Activated naive CD4-positive, alpha-beta T cell treated with anti-CD3 and anti-CD28 coated beads, Interleukin-2, amount 10 ng/mL, durations not matched to agents 7 days and 5 days (primary cell): ENCODE measurements at regions of chr17 and their contacts with region 1.

Region 1: DNA sequence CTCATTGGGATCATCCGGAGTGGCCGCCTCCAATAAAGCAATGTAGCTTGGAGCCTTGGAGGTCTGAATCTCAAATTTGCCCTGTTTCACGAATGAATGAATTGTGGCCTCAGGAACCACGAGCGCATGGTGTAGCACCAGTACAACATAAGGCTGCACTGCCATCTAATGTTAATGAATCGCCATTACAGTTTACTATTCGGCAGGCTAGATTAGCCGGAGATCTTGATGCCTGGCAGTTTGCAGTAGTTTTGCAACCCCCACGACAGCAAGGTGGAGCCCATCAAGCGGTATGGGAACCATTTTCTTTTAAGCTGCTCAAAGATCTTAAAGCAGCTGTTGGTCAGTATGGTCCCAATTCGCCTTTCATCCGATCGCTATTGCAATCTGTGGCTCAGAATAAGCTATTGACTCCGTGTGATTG is 18.8 kb downstream of the ALOX15B start:
- DNase-seq: peak; percentile 52
- H3K4me3 Mint-ChIP-seq: no peak overlapping the region
- H3K27ac Mint-ChIP-seq: no peak overlapping the region
- H3K4me1 Mint-ChIP-seq: peaks cover 15% of the 10 kb centered on the region
- H3K27me3 Mint-ChIP-seq: peaks cover 74% of the 10 kb centered on the region

Region 2: DNA sequence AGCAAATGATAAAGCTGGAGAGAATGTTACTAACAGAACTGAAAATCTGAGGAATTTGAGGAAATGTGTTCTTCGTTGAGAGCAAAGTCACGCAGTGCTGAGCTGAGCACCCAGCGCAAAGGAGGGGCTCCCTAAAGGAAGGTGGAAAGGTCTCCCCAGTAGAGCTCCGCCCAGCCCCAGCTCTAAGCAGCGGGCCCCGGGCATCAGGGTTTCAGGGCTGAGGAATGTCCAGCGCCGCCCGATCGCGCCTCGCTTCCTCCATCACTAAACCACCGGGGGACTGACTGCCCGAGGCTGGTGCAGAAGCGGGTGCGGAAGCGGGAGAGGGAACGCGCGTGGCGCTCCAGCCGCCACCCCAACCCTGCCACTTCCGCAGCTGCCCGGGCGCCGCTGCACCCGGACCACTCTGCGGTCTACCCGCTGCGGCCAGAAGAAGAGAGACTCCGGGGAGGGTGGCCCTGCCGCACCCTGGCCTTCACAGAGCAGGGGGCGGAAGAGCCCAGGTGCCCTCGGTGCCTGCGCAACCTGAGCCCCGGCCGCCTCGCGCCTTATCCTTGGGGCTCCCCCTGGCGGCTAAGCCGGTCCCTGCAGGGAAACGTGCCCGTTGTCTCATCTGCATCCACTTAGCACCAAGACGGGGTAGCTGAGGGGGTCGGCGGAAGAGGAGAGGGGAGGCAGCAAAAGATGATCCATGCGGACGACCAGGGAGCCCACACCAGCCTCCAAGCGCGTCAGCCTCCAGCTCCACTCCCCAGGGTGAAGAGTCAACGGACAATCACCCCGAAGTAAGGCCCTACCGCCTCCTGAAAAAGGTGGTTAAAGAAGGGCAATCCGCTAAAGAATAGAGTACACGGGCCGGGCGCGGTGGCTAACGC is 67.7 kb before region 1 on chr17:
- CTCF ChIA-PET with region 1: interaction called, 11 read pairs
- DNase-seq: peak; percentile 93
- H3K4me3 Mint-ChIP-seq: peak overlapping the region; percentile 70
- H3K27ac Mint-ChIP-seq: peak overlapping the region; percentile 74
- H3K4me1 Mint-ChIP-seq: peaks cover 35% of the 10 kb centered on the region
- H3K27me3 Mint-ChIP-seq: peaks cover 28% of the 10 kb centered on the region

Region 3: DNA sequence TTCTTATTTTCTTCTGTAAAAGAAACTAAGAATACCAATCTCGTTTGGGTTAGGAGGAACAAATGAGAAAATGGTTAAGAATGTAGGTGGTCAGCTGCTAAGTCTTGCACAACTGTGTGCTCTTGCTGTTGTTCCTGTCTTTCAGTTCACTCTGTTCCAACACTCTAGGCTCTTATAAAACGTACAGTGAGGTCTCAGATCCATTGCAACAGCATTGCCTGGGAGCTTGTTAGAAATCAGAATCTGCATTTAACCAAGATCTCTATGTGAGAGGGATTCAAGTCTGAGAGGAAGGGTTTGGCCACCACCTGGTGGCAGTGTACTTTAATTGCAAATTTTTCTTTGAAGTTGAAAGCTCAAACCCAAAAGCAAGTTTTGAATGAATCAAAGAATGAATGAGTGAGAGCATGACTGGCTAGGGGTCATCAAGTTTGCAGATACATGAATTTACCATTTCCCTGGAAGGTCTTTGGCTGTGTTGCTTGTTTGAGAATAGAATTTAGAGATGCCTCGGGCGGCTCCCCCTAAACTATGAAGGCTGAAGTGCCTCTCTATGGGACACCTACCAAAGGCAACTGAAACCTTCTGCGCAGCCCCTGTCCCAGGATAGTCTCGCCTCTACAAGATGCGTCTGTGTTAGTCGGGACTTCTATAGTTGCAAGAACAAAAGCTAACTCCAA is 16.3 kb before region 1 on chr17:
- CTCF ChIA-PET with region 1: interaction called, 29 read pairs
- DNase-seq: peak; percentile 67
- H3K4me3 Mint-ChIP-seq: no peak overlapping the region
- H3K27ac Mint-ChIP-seq: no peak overlapping the region
- H3K4me1 Mint-ChIP-seq: no peaks in the 10 kb centered on the region
- H3K27me3 Mint-ChIP-seq: peaks cover 59% of the 10 kb centered on the region

Region 4: GRCh38 chr17:8091033-8091687 is 33.5 kb after region 1 on chr17:
- CTCF ChIA-PET with region 1: interaction called, 17 read pairs
- DNase-seq: no peak
- H3K4me3 Mint-ChIP-seq: no peak overlapping the region
- H3K27ac Mint-ChIP-seq: no peak overlapping the region
- H3K4me1 Mint-ChIP-seq: peaks cover 20% of the 10 kb centered on the region
- H3K27me3 Mint-ChIP-seq: peaks cover 92% of the 10 kb centered on the region

Region 5: DNA sequence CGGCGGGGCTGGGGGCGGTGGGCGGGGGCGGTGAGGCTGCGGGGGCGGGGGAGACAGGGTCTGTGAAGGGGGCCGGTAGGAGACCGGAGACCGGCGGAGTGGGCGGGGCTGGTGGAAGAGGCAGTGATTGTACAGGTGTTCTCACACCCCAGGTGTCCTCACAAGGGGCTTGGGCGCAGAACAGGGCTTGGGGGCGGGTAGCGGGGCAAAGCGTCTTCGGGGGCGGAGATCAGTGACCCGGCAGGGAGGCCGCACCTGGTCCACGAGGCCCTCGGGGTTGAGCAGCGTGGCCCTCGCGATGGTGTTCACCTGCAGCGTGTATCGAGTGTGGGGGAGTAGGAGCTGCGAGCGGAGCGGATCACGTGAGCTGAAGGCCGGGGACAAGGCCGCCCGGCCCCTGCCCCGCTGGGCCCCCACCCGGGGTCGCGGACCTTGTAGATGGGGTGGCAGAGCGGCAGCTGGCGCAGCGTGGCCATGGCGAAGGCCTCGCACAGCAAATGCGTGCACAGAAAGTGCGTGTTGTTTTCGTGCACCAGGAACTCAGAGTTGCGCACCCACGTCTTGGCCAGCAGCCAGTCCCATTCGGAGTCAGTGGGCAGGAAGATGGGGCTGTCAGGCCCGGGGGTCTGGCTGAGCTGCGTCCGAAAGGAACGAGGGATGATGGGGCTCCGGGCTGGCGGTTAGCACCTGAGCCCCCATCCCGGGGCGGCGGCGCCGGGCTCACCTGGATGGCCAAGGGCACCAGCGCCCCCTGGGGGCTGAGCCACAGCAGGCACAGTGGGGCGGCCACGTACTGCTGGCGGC is 52.2 kb after region 1 on chr17:
- CTCF ChIA-PET with region 1: interaction called, 113 read pairs
- DNase-seq: peak; percentile 86
- H3K4me3 Mint-ChIP-seq: no peak overlapping the region
- H3K27ac Mint-ChIP-seq: no peak overlapping the region
- H3K4me1 Mint-ChIP-seq: peaks cover 2% of the 10 kb centered on the region
- H3K27me3 Mint-ChIP-seq: peaks cover 83% of the 10 kb centered on the region

Region 6: DNA sequence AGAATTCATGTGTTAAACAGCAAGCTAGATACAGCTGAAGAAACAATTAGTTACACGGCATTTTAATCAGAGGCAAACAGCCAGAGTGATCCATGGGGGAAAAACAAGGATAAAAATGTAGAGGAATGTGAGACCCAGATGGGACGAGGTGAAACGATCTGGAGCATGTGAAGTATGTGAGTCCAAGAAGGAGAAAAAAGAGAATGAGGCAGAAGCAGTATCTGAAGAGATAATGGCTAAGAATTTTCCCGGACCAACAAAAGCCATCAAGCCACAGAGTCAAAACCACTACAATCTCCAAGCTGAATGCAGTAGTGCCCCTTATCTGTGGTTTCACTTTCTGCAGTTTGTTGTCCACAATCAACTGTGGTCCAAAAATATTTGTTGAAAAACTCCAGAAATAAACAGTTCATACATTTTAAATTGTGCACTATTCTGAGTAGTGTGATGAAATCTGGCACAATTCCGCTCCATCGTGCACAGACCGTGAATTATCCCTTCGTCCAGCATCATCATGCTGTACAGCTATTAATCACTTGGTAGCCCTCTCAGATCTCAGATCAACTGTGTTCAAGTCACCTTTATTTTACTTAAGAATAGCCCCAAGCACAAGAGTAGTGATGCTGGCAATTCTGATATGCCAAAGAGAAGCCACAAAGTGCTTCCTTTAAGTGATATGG is 554.1 kb after region 1 on chr17:
- CTCF ChIA-PET with region 1: no interaction called
- DNase-seq: no peak
- H3K4me3 Mint-ChIP-seq: no peak overlapping the region
- H3K27ac Mint-ChIP-seq: no peak overlapping the region
- H3K4me1 Mint-ChIP-seq: no peaks in the 10 kb centered on the region
- H3K27me3 Mint-ChIP-seq: no peaks in the 10 kb centered on the region